Prostate gland (tissue), 2 donors: ENCODE measurements at regions of chr2 and their contacts with region 1.

Region 1: DNA sequence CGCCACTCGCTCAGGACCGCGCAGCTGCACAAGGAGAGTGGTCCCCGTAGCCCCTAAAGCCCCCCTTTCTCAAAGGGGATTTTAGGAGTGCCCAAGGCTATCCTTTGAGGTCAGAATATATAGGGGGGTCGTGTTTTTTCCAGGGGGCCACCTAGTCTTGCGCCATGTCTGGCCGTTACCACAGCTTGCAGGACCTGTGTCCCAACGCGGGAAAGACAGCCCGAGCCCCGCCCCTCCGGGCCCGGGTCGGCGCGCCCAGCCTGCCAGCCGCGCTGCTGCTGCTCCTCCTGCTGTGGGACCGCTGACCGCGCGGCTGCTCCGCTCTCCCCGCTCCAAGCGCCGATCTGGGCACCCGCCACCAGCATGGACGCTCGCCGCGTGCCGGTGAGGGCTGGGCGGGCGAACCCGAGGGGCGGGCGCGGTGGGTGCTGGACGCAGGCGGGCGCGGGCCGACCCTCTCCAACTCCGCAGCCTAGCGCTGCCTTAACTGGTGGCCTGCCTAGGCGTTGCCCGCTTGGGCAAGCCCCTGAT is at the start of gene CDCA7:
- DNase-seq: peak; percentile 65
- H3K4me3 ChIP-seq: peak within 1 kb of the TSS; percentile 43 to 47
- H3K27ac ChIP-seq: peak within 1 kb of the TSS; percentile 27 to 56
- H3K4me1 ChIP-seq: no peaks in the 10 kb centered on the region
- H3K27me3 ChIP-seq: peaks cover 4% of the 10 kb centered on the region
- CTCF ChIP-seq: peak in 2 of 4 experiments; percentile 33 to 34
- POLR2A ChIP-seq: no peak
- total RNA-seq, gene CDCA7: 9.5 to 13.7 TPM

Region 2: GRCh38 chr2:172972005-172972619 is 382.6 kb before region 1 on chr2:
- intact Hi-C with region 1: loop called (anchors 10 kb)
- DNase-seq: no peak
- H3K4me3 ChIP-seq: no peak overlapping the region
- H3K27ac ChIP-seq: no peak overlapping the region
- H3K4me1 ChIP-seq: no peaks in the 10 kb centered on the region
- H3K27me3 ChIP-seq: no peaks in the 10 kb centered on the region
- CTCF ChIP-seq: peak in 1 of 4 experiments; percentile 41
- POLR2A ChIP-seq: no peak

Region 3: DNA sequence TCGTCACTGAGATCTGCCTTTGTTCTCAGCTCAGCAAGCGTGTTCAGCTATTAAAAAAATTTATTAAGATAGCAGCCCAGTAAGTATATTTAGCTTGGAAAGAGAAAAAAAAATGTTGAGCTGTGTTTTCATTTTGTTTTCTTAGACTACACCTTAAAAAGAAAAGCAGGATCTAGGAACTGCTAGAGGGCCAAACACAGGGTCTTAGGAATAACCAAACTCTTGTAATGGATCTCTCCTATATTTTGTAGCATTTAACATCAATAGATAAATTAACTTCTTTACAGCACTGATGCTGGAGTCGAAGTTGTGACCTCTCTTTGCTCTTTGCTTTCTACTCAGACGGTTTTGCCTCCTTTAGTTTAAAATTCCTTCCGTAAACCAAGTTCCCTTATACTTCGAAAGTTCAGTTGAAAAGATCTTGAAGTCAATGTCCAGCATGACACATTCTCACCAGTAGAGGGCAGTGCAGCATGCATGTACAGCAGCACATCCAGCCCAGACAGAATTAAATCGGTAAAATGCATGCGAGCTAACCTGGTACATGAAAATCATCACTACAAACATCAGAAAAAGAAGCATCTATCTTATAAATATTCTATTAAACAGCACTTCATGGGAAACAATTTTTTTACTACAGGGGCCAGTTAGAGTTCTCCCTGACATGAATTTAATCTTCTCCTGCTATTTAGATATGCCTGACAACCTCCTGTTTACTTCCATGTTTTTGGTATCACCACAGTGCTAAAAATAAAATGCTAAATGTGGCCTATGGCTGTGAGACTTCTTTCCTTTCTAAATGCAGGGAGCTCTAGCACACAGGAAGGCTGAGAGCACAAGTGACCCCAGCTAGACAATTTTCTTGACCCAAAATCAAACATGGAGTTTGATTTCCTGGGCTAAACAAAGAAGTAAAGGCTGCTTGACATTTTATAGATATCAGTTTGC is 327.2 kb before region 1 on chr2:
- intact Hi-C with region 1: loop called (anchors 10 kb)
- DNase-seq: peak; percentile 93
- H3K4me3 ChIP-seq: no peak overlapping the region
- H3K27ac ChIP-seq: peak overlapping the region; percentile 38 to 41
- H3K4me1 ChIP-seq: no peaks in the 10 kb centered on the region
- H3K27me3 ChIP-seq: no peaks in the 10 kb centered on the region
- CTCF ChIP-seq: peak; percentile 95 to 97 (median 95)
- POLR2A ChIP-seq: no peak

Region 4: DNA sequence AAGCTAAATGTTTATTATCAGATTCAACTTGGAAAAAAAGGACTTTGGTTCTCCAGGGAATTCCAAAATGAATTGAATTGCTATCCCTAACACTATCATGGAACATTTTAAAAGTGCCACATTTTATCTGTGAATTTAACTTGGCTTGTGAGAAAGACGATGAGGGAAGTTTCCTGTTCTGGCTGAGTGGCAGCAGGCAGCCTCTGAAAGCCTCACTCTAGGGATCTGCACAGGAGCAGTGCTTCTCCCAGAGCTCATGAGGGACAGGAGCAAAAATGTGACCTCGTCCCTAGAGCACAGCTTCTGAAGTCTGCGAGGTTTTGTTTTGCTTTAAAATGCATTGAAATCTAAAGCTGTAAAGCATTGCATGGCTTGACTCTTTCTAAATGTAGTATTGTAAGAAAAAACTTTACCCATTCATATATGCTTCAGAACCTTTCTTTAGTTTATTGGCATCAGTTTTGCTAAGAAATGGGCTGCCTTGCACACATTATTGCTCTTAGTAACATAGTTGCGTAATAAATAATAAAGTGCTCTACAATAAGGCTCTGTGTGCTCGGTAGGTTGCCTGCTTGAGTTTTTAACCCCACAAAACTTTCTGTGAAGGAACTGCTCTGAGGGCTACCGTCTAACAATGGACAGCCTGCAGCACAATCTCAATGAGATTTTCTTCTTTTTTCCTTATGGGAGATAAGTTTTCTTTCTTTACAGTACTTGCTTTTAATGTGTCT is 136.2 kb before region 1 on chr2:
- intact Hi-C with region 1: loop called (anchors 5 kb)
- DNase-seq: no peak
- H3K4me3 ChIP-seq: no peak overlapping the region
- H3K27ac ChIP-seq: no peak overlapping the region
- H3K4me1 ChIP-seq: no peaks in the 10 kb centered on the region
- H3K27me3 ChIP-seq: no peaks in the 10 kb centered on the region
- CTCF ChIP-seq: no peak
- POLR2A ChIP-seq: no peak

Region 5: DNA sequence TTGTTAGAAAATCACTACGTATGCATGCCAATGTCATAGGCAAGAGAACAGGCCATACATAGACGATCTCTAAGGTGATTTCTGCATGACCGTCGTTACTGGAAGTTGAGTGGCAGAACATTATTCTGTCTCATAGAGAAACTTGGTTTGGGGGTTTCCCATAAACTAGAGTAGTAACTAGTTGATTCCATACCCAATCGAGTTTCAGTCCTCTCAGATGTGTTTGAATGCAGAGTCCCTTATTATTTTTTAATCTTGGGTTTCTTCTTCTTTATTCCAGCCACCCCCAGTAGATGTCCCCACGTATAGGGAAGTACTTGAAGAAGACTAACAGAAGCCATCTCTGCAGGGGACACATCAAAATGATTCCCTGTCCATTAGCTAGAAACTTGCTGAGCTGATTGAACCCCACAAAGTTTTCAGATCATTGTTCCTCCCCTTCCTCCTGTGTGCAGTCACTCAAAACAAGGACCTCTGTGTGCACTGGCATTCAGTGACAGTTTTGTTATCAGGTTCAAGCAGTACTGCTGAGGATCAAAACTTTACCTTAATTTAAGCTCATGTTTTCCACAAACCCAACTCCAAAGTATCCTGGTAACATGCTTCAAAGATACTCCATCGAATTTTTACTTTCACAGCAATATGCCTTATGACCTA is 68.4 kb before region 1 on chr2:
- intact Hi-C with region 1: loop called (anchors 10 kb)
- DNase-seq: no peak
- H3K4me3 ChIP-seq: no peak overlapping the region
- H3K27ac ChIP-seq: no peak overlapping the region
- H3K4me1 ChIP-seq: no peaks in the 10 kb centered on the region
- H3K27me3 ChIP-seq: no peaks in the 10 kb centered on the region
- CTCF ChIP-seq: no peak
- POLR2A ChIP-seq: no peak

Region 6: DNA sequence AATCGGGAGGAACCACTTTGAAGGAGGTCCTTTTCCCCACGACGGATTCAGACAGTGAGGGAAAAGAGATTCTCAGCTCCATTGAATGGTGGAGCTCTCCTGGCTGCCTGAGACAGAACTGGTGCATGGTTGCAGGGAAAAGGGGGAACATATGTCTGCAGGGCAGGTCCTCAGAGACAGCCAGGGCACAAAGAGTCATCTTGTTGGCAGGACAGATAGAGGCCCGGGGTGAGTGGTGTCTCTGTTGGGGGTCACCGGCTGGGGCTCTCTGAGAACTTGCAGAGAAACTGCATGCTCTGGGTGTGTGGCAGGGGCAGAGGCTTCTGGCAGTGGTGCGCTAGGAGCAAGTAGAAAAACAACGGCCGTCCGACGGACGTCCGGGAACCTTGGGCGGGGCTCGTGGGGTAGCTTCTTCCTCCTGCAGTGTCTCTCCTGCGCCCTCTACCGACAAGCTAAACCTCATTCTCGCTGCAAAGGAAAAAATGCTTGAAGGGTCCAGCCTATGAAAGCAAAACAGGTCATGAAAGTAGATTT is 94.3 kb after region 1 on chr2:
- intact Hi-C with region 1: no loop called
- DNase-seq: peak; percentile 63
- H3K4me3 ChIP-seq: no peak overlapping the region
- H3K27ac ChIP-seq: peak overlapping the region in 1 of 2 donors; percentile 13
- H3K4me1 ChIP-seq: no peaks in the 10 kb centered on the region
- H3K27me3 ChIP-seq: no peaks in the 10 kb centered on the region
- CTCF ChIP-seq: peak in 3 of 4 experiments; percentile 48 to 55 (median 51)
- POLR2A ChIP-seq: no peak